Left ventricle myocardium inferior (tissue), 1 donor: ENCODE measurements at regions of chr13 and their contacts with region 1.

Region 1: DNA sequence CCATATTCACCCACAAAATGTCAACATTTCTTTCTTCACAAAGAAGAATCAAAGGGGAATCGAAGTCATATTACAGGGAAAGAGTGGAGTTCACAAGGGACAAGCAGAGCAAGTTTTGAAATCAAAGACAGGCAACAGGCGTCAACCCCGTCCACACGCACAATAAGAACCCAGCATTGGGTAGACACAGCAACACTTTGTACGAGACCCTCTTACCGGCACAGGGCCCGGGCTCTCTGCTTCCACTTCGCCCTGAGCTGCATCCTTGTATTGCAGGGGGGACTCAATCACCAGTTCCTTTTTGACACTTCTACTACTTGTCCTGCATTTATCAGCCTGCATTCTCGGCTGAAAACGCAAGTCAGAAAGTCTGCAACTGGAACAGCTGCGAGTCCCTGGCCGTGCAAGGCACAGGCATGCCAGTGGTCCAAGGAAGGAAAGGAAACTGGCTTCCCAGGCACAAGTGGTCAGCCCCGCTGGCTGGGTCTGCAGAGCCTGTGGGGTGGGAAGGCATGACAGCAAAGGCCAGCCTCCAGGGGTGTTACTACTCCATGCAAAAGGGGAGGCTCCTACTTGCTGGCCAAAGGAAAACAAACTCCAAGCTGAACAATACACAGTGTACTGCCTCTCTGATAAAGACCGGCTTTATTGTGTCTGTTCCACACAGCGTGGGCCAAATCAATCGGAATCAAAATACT is at the start of gene DOCK9:
- DNase-seq: peak; percentile 77
- H3K4me3 ChIP-seq: peak within 1 kb of the TSS; percentile 70
- H3K27ac ChIP-seq: peak within 1 kb of the TSS; percentile 92
- H3K4me1 ChIP-seq: peaks cover 74% of the 10 kb centered on the region
- H3K27me3 ChIP-seq: no peaks in the 10 kb centered on the region
- CTCF ChIP-seq: no peak
- total RNA-seq, gene DOCK9: 36.8 TPM

Region 2: DNA sequence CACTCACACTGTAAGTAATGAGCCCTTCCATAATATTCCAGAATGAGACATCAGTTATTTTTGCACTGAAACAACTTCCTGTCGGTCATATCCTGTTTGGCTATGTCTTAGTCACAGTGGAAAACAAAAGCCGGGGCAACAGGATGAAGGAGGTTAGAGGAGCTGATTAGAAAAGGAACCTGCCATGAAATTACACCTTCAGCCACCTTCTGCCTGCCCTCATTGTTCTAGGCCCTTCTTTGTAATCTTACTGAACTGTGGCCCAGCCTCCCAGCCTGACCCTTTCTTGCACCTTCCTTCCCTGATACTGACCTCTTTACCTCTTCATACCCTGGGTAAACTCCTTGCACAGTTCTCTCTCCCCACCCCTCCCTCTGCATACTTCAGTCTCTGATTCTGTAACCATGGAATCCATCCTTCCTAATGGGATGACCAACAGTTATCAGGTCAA is 67.2 kb before region 1 on chr13:
- intact Hi-C with region 1: loop called (anchors 10 kb)
- DNase-seq: no peak
- H3K4me3 ChIP-seq: no peak overlapping the region
- H3K27ac ChIP-seq: peak overlapping the region; percentile 75
- H3K4me1 ChIP-seq: peaks cover 55% of the 10 kb centered on the region
- H3K27me3 ChIP-seq: no peaks in the 10 kb centered on the region
- CTCF ChIP-seq: no peak